IMR-90 (cell line): ENCODE measurements at regions of chr10 and their contacts with region 1.

Region 1: DNA sequence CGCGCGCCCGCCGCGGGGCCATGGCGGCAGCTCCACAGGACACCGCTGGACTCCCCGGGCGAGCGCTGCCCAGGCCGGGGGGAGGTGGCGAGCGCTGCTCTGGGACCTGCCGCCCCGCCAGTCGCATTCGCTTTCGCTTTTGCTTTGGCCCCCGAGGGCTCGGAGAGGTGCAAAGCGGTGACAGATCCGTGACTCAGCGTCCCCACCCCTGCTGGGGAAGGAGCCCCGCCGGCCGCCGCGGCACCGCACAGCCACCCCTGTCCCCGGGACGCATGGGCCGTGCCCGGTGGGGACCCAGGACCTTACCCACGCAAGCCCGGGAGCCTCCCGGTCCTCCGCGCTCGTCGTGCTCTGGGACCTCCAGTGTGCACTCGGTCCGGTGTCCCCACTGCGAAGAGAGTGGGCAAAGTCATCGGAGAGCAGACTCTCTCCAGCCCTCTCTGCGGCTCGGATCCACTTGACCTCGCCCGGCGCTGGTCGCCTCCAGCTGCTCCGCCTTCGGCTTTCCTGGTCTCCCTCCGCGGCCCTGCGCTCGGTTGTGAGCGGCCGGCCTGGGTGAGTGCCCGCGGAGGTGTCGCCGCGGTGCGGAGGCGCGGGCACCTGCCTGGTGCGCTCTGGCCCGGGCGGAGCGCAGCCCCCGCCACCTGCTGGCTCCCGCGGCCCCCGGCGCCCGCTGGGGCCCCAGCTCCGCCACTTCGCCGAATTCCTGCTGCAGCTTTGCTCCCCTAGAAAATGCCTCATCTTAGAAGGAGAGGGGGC is at the start of gene IL15RA:
- DNase-seq: peak; percentile 72
- ATAC-seq: peak; percentile 82
- H3K4me3 ChIP-seq: peak within 1 kb of the TSS; percentile 68
- H3K27ac ChIP-seq: peak within 1 kb of the TSS; percentile 61
- H3K4me1 ChIP-seq: peaks cover 3% of the 10 kb centered on the region; the same call in 1 of the 2 replicates
- H3K27me3 ChIP-seq: no peaks in the 10 kb centered on the region
- CTCF ChIP-seq: 0 out of 2 replicates have a peak, but pooled peaks have one; percentile 9
- POLR2A ChIP-seq: no peak
- RAD21 ChIP-seq: no peak
- total RNA-seq, gene IL15RA: 1.4 and 2.0 TPM in 2 replicates

Region 2: GRCh38 chr10:5862360-5862961 is 115.2 kb before region 1 on chr10:
- CTCF ChIA-PET with region 1: no interaction called
- POLR2A ChIA-PET with region 1: no interaction called
- dilution Hi-C with region 1: no loop called
- in situ Hi-C with region 1: no loop called
- intact Hi-C with region 1: no loop called
- DNase-seq: peak; percentile 9
- ATAC-seq: no peak
- H3K4me3 ChIP-seq: no peak overlapping the region
- H3K27ac ChIP-seq: peak overlapping the region; percentile 30; the same call in 1 of the 2 replicates
- H3K4me1 ChIP-seq: peaks cover 10% of the 10 kb centered on the region
- H3K27me3 ChIP-seq: no peaks in the 10 kb centered on the region
- CTCF ChIP-seq: no peak
- POLR2A ChIP-seq: no peak
- RAD21 ChIP-seq: no peak

Region 3: DNA sequence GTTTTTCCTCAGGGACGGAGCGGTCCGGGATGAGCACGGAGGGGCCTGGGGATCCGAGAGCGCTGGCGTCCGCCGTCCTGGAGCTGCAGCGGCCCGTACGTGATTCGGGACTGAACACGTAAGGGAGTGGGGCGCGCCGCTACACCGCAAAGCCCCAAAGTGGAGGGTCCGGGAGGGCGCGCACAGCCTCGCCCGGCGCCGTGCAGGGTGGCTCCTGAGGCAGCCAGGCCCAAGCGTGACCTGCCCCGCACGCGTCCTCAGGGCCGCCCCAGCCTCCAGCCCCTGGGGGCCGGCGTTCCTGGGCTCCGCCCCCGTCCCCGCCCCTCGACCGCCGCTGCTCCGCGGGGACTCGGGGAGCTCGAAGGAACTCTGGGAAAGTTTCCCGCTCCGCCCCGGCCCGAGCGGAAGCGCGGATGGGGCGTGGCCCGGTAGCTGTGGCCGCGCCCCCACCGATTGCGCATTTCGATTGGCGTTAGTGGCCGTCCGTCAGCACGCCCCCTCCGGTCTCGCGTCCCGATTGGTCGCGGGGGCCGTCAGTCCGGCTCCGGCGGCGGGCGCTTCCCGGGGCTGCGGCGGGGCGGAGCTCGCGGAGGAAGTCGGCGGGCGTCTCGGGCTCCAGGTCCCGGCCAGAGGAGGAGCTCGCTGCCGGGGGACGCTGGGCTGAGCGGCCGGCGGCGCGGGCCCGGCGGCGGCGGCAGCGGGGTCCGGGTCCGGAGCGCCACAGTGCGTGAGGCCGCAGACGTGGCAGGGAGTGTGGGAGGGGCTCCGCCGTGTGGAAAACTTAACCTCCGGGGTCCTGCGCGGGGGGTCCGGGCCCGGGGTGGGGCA is 87.8 kb before region 1 on chr10 and contains the starts of genes ANKRD16 and FBH1:
- CTCF ChIA-PET with region 1: no interaction called
- POLR2A ChIA-PET with region 1: no interaction called
- dilution Hi-C with region 1: no loop called
- in situ Hi-C with region 1: no loop called
- intact Hi-C with region 1: loop called (anchors 1 kb)
- DNase-seq: peak; percentile 99
- ATAC-seq: peak; percentile 89
- H3K4me3 ChIP-seq: peak within 1 kb of the TSS; percentile 99
- H3K27ac ChIP-seq: peak within 1 kb of the TSS; percentile 90
- H3K4me1 ChIP-seq: peaks cover 14% of the 10 kb centered on the region
- H3K27me3 ChIP-seq: no peaks in the 10 kb centered on the region
- CTCF ChIP-seq: no peak; the same call in 1 of the 2 replicates
- POLR2A ChIP-seq: peak; percentile 89
- RAD21 ChIP-seq: no peak
- total RNA-seq, gene ANKRD16: 3.3 and 5.7 TPM in 2 replicates
- total RNA-seq, gene FBH1: 60.8 and 72.2 TPM in 2 replicates

Region 4: GRCh38 chr10:5927306-5927705 is 50.3 kb before region 1 on chr10:
- CTCF ChIA-PET with region 1: no interaction called
- POLR2A ChIA-PET with region 1: no interaction called
- dilution Hi-C with region 1: no loop called
- in situ Hi-C with region 1: no loop called
- intact Hi-C with region 1: loop called (anchors 2 kb)
- DNase-seq: peak; percentile 92
- ATAC-seq: peak; percentile 91
- H3K4me3 ChIP-seq: no peak overlapping the region
- H3K27ac ChIP-seq: peak overlapping the region; percentile 18; the same call in 1 of the 2 replicates
- H3K4me1 ChIP-seq: peaks cover 14% of the 10 kb centered on the region
- H3K27me3 ChIP-seq: no peaks in the 10 kb centered on the region
- CTCF ChIP-seq: no peak
- POLR2A ChIP-seq: no peak
- RAD21 ChIP-seq: no peak

Region 5: GRCh38 chr10:5960070-5960972 is 17.3 kb before region 1 on chr10:
- CTCF ChIA-PET with region 1: no interaction called
- POLR2A ChIA-PET with region 1: no interaction called
- dilution Hi-C with region 1: no loop called
- in situ Hi-C with region 1: no loop called
- intact Hi-C with region 1: loop called (anchors 2 kb)
- DNase-seq: peak; percentile 73
- ATAC-seq: peak; percentile 79
- H3K4me3 ChIP-seq: no peak overlapping the region
- H3K27ac ChIP-seq: no peak overlapping the region
- H3K4me1 ChIP-seq: peaks cover 18% of the 10 kb centered on the region
- H3K27me3 ChIP-seq: no peaks in the 10 kb centered on the region
- CTCF ChIP-seq: no peak
- POLR2A ChIP-seq: no peak
- RAD21 ChIP-seq: no peak

Region 6: GRCh38 chr10:6014241-6014761 is 36.7 kb after region 1 on chr10:
- CTCF ChIA-PET with region 1: no interaction called
- POLR2A ChIA-PET with region 1: no interaction called
- dilution Hi-C with region 1: no loop called
- in situ Hi-C with region 1: no loop called
- intact Hi-C with region 1: loop called (anchors 2 kb)
- DNase-seq: peak; percentile 42
- ATAC-seq: peak; percentile 75
- H3K4me3 ChIP-seq: no peak overlapping the region
- H3K27ac ChIP-seq: no peak overlapping the region
- H3K4me1 ChIP-seq: peaks cover 4% of the 10 kb centered on the region
- H3K27me3 ChIP-seq: peaks cover 11% of the 10 kb centered on the region
- CTCF ChIP-seq: peak; percentile 68
- POLR2A ChIP-seq: no peak
- RAD21 ChIP-seq: peak; percentile 60